ENCODE measurements at regions of chr9 and their contacts with region 1.

Region 1: DNA sequence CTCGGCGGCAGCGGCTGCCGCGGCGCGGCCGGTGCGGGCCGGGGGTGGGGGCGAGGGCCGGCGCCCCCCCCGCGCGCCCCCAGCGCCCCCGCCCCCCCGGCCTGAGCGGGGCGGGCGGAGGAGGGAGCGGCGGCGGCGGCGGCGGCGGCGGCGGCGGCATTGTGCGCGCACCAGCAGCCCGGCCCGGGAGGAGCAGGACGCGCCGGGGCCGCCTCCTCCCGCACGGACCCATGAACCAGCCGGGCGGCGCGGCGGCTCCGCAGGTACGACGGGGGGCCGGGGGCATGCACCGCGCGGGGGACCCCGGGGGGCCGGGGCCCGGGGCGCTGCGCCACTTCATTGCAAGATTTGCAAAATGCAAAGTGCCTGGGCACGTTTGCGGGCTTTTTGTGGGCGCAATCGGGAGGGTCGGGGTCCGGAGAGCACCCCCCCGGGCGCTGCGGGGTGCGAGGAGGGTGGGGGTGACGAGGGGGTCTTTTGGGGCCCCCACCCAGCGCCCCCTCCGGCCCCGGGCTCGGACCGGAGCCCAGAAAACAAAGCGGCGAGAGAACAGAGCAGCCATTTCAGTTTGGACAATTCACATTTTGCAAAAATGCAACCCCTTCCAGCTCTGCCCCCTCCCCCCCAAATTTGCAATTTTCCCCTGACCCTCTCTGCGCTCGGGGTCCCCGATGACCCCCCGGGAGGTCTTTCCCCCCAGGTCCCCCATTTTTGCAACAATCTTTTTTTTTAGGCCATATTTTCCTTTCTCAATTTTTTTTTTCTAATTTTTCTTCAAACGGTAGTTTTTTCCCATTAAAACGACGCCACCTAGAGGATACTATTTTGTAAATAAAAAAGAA is at the start of gene ZNF618:
- DNase-seq: peak in 1 of 2 experiments; percentile 67
- H3K4me3 ChIP-seq: peak within 1 kb of the TSS; percentile 70 to 100 (median 74)
- H3K27ac ChIP-seq: peak within 1 kb of the TSS; percentile 66; the same call in 1 of the 2 replicates
- H3K4me1 ChIP-seq: peaks cover 3 to 6% (median 5%) of the 10 kb centered on the region in 4 experiments
- H3K27me3 ChIP-seq: peaks cover 0 to 4% (median 0%) of the 10 kb centered on the region in 4 experiments; a peak in 1 of 7 replicates
- CTCF ChIP-seq: no peak
- EP300 ChIP-seq: no peak
- POLR2A ChIP-seq: peak; percentile 23 to 35; a peak in 2 of 3 replicates
- RAD21 ChIP-seq: no peak
- total RNA-seq, gene ZNF618: 28.5 and 31.4 TPM in 2 replicates

Region 2: GRCh38 chr9:113888976-113889375 is 12.6 kb after region 1 on chr9:
- CTCF ChIA-PET with region 1: interaction called, 11 read pairs
- POLR2A ChIA-PET with region 1: interaction called, 4 read pairs
- DNase-seq: no peak
- H3K4me3 ChIP-seq: no peak overlapping the region
- H3K27ac ChIP-seq: no peak overlapping the region
- H3K4me1 ChIP-seq: peaks cover 7 to 19% (median 13%) of the 10 kb centered on the region in 4 experiments
- H3K27me3 ChIP-seq: no peaks in the 10 kb centered on the region
- CTCF ChIP-seq: no peak
- EP300 ChIP-seq: no peak
- POLR2A ChIP-seq: no peak
- RAD21 ChIP-seq: no peak

Region 3: GRCh38 chr9:113957821-113958341 is 81.5 kb after region 1 on chr9:
- CTCF ChIA-PET with region 1: no interaction called
- POLR2A ChIA-PET with region 1: no interaction called
- DNase-seq: no peak
- H3K4me3 ChIP-seq: no peak overlapping the region
- H3K27ac ChIP-seq: no peak overlapping the region
- H3K4me1 ChIP-seq: peaks cover 0 to 3% (median 0%) of the 10 kb centered on the region in 4 experiments; a peak in 3 of 7 replicates
- H3K27me3 ChIP-seq: no peaks in the 10 kb centered on the region
- CTCF ChIP-seq: no peak
- EP300 ChIP-seq: no peak
- POLR2A ChIP-seq: no peak
- RAD21 ChIP-seq: no peak

Measured in H1 (cell line).